OCI-LY7 (cell line): ENCODE measurements at regions of chr4 and their contacts with region 1.

Region 1: DNA sequence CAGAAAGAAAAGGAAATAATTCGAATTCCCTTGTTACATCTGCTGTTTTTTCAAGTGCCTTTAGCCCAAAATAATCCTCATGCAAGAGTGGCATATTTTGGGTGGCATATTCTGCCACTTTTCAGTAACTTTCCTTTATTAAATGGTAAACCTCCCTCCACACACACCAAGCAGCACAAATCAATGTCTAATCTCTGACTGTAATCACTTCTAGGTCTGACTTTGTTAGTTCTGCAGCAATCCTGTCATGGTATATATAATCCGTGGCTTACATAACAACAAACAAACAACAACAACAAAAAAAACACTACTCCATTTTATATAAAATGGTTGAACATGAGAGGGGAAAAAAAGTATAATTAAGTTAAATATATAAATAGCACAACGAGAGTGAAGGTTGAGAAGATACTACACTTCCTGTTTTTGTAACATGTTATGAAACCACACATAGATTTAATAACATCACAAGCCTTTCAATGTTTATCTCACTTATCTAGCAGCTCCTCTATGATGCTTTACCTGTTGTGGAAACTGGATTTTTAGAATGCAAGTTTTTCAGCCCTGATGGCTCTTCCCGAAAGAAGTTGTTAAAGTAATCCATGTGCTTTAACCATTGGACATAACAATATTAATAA is 715.4 kb downstream of the GRXCR1 start:
- DNase-seq: peak; percentile 41
- H3K4me3 ChIP-seq: peak overlapping the region; percentile 10
- H3K27ac ChIP-seq: peak overlapping the region; percentile 69
- H3K4me1 ChIP-seq: peaks cover 24% of the 10 kb centered on the region
- CTCF ChIP-seq: no peak

Region 2: GRCh38 chr4:43251841-43252240 is 356.1 kb before region 1 on chr4:
- CTCF ChIA-PET with region 1: no interaction called
- POLR2A ChIA-PET with region 1: no interaction called
- intact Hi-C with region 1: no loop called
- DNase-seq: no peak
- H3K4me3 ChIP-seq: no peak overlapping the region
- H3K27ac ChIP-seq: no peak overlapping the region
- H3K4me1 ChIP-seq: no peaks in the 10 kb centered on the region
- CTCF ChIP-seq: no peak

Region 3: DNA sequence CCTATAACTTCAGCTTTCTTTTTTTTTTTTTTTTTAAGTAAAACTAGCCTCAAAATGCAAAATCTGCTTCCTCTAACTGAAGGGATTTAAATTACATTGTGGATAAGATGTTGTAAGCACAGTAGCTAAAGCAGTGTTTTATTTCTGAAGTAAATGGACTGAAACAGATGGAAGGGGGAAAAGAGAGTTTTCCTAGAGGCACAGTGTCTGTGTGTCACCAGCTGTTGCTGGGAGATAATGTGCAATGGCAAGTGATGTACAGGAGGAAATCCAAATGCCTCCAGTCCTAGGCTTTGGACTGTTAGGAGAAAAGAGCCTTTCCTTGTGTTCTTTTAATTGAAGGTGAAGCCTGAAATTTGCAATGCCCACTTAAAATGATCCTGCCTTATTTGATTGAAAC is 43.4 kb before region 1 on chr4:
- CTCF ChIA-PET with region 1: no interaction called
- POLR2A ChIA-PET with region 1: interaction called, 18 read pairs
- intact Hi-C with region 1: loop called (anchors 2 kb)
- DNase-seq: no peak
- H3K4me3 ChIP-seq: no peak overlapping the region
- H3K27ac ChIP-seq: peak overlapping the region; percentile 69
- H3K4me1 ChIP-seq: peaks cover 45% of the 10 kb centered on the region
- CTCF ChIP-seq: no peak